Activated CD4-positive, alpha-beta T cell treated with anti-CD3 and anti-CD28 coated beads, Interleukin-2, amount 10 ng/mL, durations not matched to agents 24 days and 14 days (primary cell): ENCODE measurements at regions of chr17 and their contacts with region 1.

Region 1: GRCh38 chr17:44533533-44534246 is 23.6 kb upstream of the FZD2 start:
- DNase-seq: peak; percentile 95
- H3K4me3 Mint-ChIP-seq: peak overlapping the region; percentile 27
- H3K27ac Mint-ChIP-seq: peak overlapping the region; percentile 0
- H3K4me1 Mint-ChIP-seq: peaks cover 7% of the 10 kb centered on the region
- H3K27me3 Mint-ChIP-seq: no peaks in the 10 kb centered on the region

Region 2: GRCh38 chr17:44636562-44636961 is 102.9 kb after region 1 on chr17:
- intact Hi-C with region 1: loop called (anchors 10 kb)
- DNase-seq: no peak
- H3K4me3 Mint-ChIP-seq: no peak overlapping the region
- H3K27ac Mint-ChIP-seq: no peak overlapping the region
- H3K4me1 Mint-ChIP-seq: no peaks in the 10 kb centered on the region
- H3K27me3 Mint-ChIP-seq: peaks cover 25% of the 10 kb centered on the region

Region 3: GRCh38 chr17:44651228-44651627 is 117.5 kb after region 1 on chr17:
- intact Hi-C with region 1: no loop called
- DNase-seq: no peak
- H3K4me3 Mint-ChIP-seq: no peak overlapping the region
- H3K27ac Mint-ChIP-seq: no peak overlapping the region
- H3K4me1 Mint-ChIP-seq: no peaks in the 10 kb centered on the region
- H3K27me3 Mint-ChIP-seq: peaks cover 42% of the 10 kb centered on the region

Region 4: DNA sequence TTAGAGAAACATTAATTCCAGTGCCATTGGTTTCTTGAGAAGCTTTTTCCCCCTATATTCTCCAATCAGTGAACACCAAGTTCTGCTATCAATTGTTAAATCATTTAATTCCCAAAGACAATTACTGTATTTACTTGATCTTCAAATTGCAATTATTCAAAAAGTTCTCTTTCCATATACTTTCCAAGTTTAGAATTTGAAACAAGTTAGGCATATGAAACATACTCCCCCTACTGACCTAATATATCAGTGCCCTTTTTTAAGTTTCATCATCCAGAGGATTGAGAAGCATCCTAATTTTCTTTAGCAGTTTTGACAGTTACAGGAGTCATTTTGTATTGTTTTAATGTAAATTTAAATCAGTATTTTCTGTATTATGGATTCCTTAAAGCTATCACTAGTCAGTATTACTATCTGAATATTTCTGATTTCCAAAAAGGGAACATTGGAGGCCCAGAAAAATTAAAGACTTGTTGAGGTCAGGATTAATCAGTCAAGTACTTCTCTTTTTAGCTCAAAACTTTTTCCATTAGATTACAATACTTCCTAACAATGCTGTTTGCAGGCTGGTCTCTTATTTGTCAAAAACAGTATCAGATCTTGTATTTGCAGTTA is 138.9 kb after region 1 on chr17:
- intact Hi-C with region 1: loop called (anchors 5 kb)
- DNase-seq: no peak
- H3K4me3 Mint-ChIP-seq: no peak overlapping the region
- H3K27ac Mint-ChIP-seq: no peak overlapping the region
- H3K4me1 Mint-ChIP-seq: no peaks in the 10 kb centered on the region
- H3K27me3 Mint-ChIP-seq: peaks cover under 1% of the 10 kb centered on the region